ENCODE measurements at regions of chr1 and their contacts with region 1.

Region 1: GRCh38 chr1:151459331-151460046 is at the start of gene POGZ:
- DNase-seq: peak; percentile 97
- H3K4me3 Mint-ChIP-seq: peak within 1 kb of the TSS; percentile 87
- H3K27ac Mint-ChIP-seq: peak within 1 kb of the TSS; percentile 91
- H3K4me1 Mint-ChIP-seq: peaks cover 19% of the 10 kb centered on the region
- H3K27me3 Mint-ChIP-seq: peaks cover 14% of the 10 kb centered on the region
- total RNA-seq, gene POGZ: 82.6 and 86.5 TPM in 2 replicates

Region 2: GRCh38 chr1:151472856-151473731 is 13.6 kb after region 1 on chr1:
- intact Hi-C with region 1: loop called (anchors 1 kb)
- DNase-seq: peak; percentile 66
- H3K4me3 Mint-ChIP-seq: peak overlapping the region; percentile 70
- H3K27ac Mint-ChIP-seq: peak overlapping the region; percentile 11
- H3K4me1 Mint-ChIP-seq: peaks cover 16% of the 10 kb centered on the region
- H3K27me3 Mint-ChIP-seq: peaks cover 9% of the 10 kb centered on the region

Region 3: DNA sequence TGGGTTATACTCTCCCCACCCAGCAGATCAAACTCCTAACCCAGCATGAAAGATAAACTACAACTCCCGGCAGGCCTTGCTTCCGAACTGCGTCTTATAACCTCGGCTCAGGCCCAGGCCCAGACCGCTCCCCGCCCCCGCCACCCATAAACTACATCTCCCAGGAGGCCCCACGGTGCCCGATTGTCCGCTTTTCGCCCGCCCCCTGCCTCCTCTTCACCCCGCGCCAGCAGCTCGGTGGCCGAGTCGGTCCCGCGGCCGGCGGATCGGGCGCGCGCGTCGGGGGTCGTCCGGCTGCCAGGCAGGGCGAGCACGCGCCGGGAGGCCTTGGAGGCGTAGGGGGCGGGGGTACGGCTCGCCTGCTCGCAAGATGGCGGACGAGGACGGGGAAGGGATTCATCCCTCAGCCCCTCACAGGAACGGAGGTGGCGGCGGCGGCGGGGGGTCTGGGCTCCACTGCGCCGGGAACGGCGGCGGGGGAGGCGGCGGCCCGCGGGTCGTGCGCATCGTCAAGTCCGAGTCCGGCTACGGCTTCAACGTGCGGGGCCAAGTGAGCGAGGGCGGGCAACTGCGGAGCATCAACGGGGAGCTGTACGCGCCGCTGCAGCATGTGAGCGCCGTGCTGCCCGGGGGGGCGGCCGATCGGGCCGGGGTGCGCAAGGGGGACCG is 152.5 kb after region 1 on chr1 and contains the start of gene SNX27:
- intact Hi-C with region 1: loop called (anchors 10 kb)
- DNase-seq: peak; percentile 95
- H3K4me3 Mint-ChIP-seq: peak within 1 kb of the TSS; percentile 93
- H3K27ac Mint-ChIP-seq: peak within 1 kb of the TSS; percentile 90
- H3K4me1 Mint-ChIP-seq: peaks cover 36% of the 10 kb centered on the region
- H3K27me3 Mint-ChIP-seq: peaks cover 9% of the 10 kb centered on the region
- total RNA-seq, gene SNX27: 31.6 and 33.1 TPM in 2 replicates